Left ventricle myocardium superior (tissue), 1 donor: ENCODE measurements at regions of chr14 and their contacts with region 1.

Region 1: DNA sequence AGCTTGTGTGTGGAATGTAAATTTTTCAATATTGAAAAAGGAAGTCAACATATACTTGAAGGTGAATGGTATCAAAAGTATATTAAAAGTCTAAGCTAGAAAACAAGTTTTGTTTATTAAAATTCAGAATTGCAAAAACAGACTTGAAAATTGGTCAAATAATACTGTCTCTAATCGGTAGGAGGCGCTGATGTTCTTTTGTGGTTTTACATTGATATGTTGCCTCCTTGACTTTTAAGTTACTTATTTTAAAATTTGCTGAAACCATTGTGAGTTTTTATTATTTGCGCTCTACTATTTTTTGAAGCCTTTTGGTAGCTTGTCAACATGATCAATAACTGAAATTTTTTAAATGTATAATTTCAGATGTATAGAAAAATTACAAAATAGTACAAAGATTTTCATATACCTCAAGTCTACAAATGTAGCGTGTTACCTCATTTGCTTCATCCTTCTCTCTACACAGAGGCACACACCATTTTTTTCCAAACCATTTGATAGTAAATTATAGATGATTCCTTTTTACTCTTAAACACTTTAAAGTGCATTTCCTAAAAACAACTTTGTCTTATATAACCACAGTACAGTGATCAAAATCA is 6.9 kb downstream of the RTRAF start:
- DNase-seq: no peak
- ATAC-seq: peak; percentile 31

Region 2: GRCh38 chr14:51704545-51704944 is 291.7 kb before region 1 on chr14:
- intact Hi-C with region 1: no loop called
- DNase-seq: no peak
- ATAC-seq: no peak

Region 3: GRCh38 chr14:52031781-52032180 is 35.5 kb after region 1 on chr14:
- intact Hi-C with region 1: no loop called
- DNase-seq: peak; percentile 81
- ATAC-seq: peak; percentile 97

Region 4: GRCh38 chr14:52069304-52070050 is 73.2 kb after region 1 on chr14:
- intact Hi-C with region 1: loop called (anchors 5 kb)
- DNase-seq: no peak
- ATAC-seq: peak; percentile 68

Region 5: GRCh38 chr14:52131640-52132320 is 135.5 kb after region 1 on chr14:
- intact Hi-C with region 1: loop called (anchors 5 kb)
- DNase-seq: peak; percentile 62
- ATAC-seq: peak; percentile 95